ENCODE measurements at regions of chr5 and their contacts with region 1.

Region 1: DNA sequence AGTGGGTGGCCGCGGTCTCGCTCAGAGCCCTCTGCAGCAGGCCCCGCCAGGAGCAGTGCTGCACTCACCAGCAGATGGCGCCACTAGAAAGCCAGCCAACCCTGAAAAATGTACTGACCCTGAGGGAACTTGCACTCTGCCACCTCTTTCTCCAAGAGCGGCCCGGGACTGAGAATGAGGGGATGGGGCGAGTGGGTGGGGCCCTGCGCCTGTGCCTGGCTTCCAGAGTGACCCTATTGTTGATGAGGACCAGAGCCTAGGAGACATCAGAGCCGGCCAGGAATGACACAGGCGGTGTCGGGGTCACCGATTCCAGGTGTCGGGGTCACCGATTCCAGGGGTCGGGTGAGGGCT is 2.9 kb upstream of the IL17B start:
- DNase-seq: peak; percentile 82 to 93
- H3K4me3 ChIP-seq: peak overlapping the region in 3 of 4 donors; percentile 19 to 28 (median 21)
- H3K27ac ChIP-seq: peak overlapping the region; percentile 41 to 94 (median 87)
- H3K4me1 ChIP-seq: peaks cover 17 to 69% (median 32%) of the 10 kb centered on the region in 4 donors
- H3K27me3 ChIP-seq: no peaks in the 10 kb centered on the region
- CTCF ChIP-seq: peak in 6 of 7 experiments; percentile 55 to 95 (median 85)
- EP300 ChIP-seq: peak; percentile 13
- POLR2A ChIP-seq: no peak

Region 2: DNA sequence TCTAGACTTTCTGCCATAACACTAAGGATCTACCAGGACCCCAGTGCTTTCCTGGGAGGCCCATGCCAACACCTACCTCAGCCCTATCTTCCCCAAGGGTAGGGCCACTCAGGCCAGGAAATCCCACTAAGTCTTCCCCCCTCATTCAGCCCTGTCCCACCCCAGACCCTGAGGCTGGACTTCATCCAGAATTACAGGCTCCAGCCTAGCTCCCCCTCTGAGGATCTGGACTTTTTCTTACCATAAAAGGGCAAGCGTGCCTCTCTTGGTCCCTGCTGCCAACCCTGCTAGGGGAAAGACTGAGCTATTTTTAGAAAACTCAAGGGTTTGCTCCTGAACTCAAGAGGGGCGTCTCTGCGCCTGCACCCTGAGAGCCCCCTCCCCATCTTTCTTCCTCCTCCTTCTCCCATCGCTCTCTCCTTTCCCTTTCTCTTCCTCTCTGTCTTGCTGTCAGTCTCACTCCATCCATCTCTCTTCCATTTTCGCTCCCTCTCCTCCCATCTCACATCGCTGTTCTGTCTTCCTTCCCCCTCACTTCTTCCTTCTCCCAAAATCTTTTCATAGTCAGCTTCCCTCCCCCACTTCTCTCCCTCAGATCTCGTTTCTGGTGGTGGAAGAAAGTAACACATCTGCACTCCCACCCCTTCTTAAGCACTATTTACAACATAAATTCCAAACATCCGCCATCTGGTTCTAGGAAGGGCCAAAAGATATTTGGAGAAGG is 35.2 kb after region 1 on chr5:
- intact Hi-C with region 1: no loop called
- DNase-seq: peak in 1 of 2 donors; percentile 89
- H3K4me3 ChIP-seq: peak overlapping the region; percentile 3 to 60 (median 34)
- H3K27ac ChIP-seq: peak overlapping the region; percentile 30 to 95 (median 89)
- H3K4me1 ChIP-seq: peaks cover 15 to 79% (median 52%) of the 10 kb centered on the region in 4 donors
- H3K27me3 ChIP-seq: no peaks in the 10 kb centered on the region
- CTCF ChIP-seq: no peak
- EP300 ChIP-seq: no peak
- POLR2A ChIP-seq: no peak

Region 3: DNA sequence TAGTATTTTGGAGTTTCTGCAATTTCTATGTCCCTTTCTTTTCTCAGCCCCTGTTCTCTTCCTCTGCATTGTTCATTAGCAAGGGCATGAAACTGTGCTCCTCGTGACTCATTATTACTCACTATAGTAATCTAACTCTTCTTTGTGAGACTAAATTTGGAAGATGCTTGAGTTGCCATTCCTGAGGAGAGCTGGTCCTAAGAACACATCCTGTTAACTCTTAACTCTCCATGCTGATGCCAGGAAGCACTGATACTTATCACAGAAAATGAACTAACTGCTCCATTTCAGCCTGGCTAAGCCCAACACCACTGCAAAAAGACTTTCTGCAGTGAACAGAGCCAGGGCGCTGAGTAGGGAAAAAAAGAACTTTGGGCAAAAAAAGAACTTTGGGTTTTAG is 179.9 kb after region 1 on chr5:
- intact Hi-C with region 1: loop called (anchors 10 kb)
- DNase-seq: peak in 1 of 2 donors; percentile 65
- H3K4me3 ChIP-seq: no peak overlapping the region
- H3K27ac ChIP-seq: peak overlapping the region; percentile 61 to 87 (median 80)
- H3K4me1 ChIP-seq: peaks cover 6 to 50% (median 32%) of the 10 kb centered on the region in 4 donors
- H3K27me3 ChIP-seq: no peaks in the 10 kb centered on the region
- CTCF ChIP-seq: no peak
- EP300 ChIP-seq: no peak
- POLR2A ChIP-seq: no peak